Activated CD8-positive, alpha-beta T cell treated with anti-CD3 and anti-CD28 coated beads, Interleukin-2, amount 10 ng/mL, durations not matched to agents 7 days and 5 days (primary cell): ENCODE measurements at regions of chr9 and their contacts with region 1.

Region 1: GRCh38 chr9:128420060-128420650 is 502 bp upstream of the CERCAM start:
- DNase-seq: peak; percentile 73
- ATAC-seq: peak; percentile 88
- H3K4me3 Mint-ChIP-seq: peak overlapping the region; percentile 65
- H3K27ac Mint-ChIP-seq: no peak overlapping the region
- H3K4me1 Mint-ChIP-seq: peaks cover 24% of the 10 kb centered on the region
- H3K27me3 Mint-ChIP-seq: peaks cover 27% of the 10 kb centered on the region

Region 2: GRCh38 chr9:128094166-128094967 is 325.8 kb before region 1 on chr9:
- CTCF ChIA-PET with region 1: no interaction called
- POLR2A ChIA-PET with region 1: no interaction called
- DNase-seq: peak; percentile 73
- ATAC-seq: peak; percentile 89
- H3K4me3 Mint-ChIP-seq: no peak overlapping the region
- H3K27ac Mint-ChIP-seq: peak overlapping the region; percentile 79
- H3K4me1 Mint-ChIP-seq: peaks cover 75% of the 10 kb centered on the region
- H3K27me3 Mint-ChIP-seq: no peaks in the 10 kb centered on the region

Region 3: GRCh38 chr9:128370826-128371621 is 49.1 kb before region 1 on chr9 and contains the start of gene URM1:
- CTCF ChIA-PET with region 1: interaction called, 11 read pairs
- POLR2A ChIA-PET with region 1: interaction called, 3 read pairs
- DNase-seq: peak; percentile 97
- ATAC-seq: peak; percentile 97
- H3K4me3 Mint-ChIP-seq: peak within 1 kb of the TSS; percentile 89
- H3K27ac Mint-ChIP-seq: peak within 1 kb of the TSS; percentile 95
- H3K4me1 Mint-ChIP-seq: peaks cover 30% of the 10 kb centered on the region
- H3K27me3 Mint-ChIP-seq: no peaks in the 10 kb centered on the region
- total RNA-seq, gene URM1: 78.9 to 79.9 TPM

Region 4: DNA sequence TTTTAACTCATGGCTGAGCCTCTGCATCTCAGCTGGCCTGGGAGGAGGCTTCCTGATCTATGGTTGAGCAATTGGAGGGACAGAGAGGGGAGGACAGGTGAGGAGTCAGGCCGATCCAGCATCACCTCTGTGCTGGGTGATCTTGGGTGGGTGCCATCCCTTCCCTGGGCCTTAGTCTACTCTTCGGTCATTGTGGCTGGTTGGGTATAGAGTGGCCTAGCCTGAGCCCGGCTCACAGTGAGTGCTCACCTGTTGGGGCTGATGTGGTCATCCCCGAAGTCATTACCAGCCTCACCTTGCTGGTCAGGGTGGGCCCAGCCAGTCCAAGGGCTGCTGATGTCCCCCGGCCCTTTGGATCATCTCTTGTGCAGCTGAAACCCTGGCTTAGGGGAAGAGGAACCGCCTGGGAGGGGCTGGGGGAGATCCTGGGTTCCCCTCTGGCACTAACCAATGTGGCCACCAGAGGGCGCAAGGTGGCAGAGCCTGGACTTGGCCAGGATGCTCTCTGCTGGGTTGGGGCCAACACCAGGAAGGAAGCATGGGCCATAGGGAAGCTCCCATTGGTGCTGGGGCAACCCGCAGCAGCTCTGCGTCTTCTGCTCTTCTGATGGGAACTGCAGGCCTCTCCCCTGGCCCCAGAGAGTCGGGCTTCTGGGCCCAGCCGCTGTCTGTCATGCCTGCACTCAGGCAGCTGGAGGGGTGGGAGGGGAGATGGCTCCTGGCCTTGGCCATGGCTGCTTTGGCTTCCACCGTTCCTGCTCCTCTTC is 18.4 kb after region 1 on chr9:
- CTCF ChIA-PET with region 1: interaction called, 11 read pairs
- POLR2A ChIA-PET with region 1: no interaction called
- DNase-seq: peak; percentile 88
- ATAC-seq: peak; percentile 96
- H3K4me3 Mint-ChIP-seq: no peak overlapping the region
- H3K27ac Mint-ChIP-seq: no peak overlapping the region
- H3K4me1 Mint-ChIP-seq: peaks cover 4% of the 10 kb centered on the region
- H3K27me3 Mint-ChIP-seq: no peaks in the 10 kb centered on the region

Region 5: GRCh38 chr9:128494108-128494745 is 74.1 kb after region 1 on chr9:
- CTCF ChIA-PET with region 1: no interaction called
- POLR2A ChIA-PET with region 1: no interaction called
- DNase-seq: no peak
- ATAC-seq: no peak
- H3K4me3 Mint-ChIP-seq: no peak overlapping the region
- H3K27ac Mint-ChIP-seq: no peak overlapping the region
- H3K4me1 Mint-ChIP-seq: peaks cover 3% of the 10 kb centered on the region
- H3K27me3 Mint-ChIP-seq: no peaks in the 10 kb centered on the region

Region 6: DNA sequence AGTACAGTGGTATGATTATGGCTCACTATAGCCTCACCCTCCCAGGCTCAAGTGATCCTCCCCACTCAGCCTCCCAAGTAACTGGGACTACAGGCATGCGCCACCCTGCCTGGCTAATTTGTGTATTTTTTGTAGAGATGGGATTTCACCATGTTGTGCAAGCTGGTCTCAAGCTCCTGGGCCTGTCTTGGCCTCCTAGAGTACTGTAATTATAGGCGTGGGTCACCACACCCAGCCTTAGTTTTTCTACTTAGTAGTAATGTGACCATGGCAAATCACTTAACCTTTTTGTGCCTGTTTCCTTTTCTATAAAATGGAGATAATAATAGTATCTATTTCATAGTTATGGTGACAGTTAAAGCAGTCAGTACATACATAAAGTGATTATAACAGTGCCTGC is 106.6 kb after region 1 on chr9:
- CTCF ChIA-PET with region 1: no interaction called
- POLR2A ChIA-PET with region 1: no interaction called
- DNase-seq: no peak
- ATAC-seq: no peak
- H3K4me3 Mint-ChIP-seq: no peak overlapping the region
- H3K27ac Mint-ChIP-seq: no peak overlapping the region
- H3K4me1 Mint-ChIP-seq: no peaks in the 10 kb centered on the region
- H3K27me3 Mint-ChIP-seq: no peaks in the 10 kb centered on the region